OCI-LY7 (cell line): ENCODE measurements at regions of chr10 and their contacts with region 1.

Region 1: DNA sequence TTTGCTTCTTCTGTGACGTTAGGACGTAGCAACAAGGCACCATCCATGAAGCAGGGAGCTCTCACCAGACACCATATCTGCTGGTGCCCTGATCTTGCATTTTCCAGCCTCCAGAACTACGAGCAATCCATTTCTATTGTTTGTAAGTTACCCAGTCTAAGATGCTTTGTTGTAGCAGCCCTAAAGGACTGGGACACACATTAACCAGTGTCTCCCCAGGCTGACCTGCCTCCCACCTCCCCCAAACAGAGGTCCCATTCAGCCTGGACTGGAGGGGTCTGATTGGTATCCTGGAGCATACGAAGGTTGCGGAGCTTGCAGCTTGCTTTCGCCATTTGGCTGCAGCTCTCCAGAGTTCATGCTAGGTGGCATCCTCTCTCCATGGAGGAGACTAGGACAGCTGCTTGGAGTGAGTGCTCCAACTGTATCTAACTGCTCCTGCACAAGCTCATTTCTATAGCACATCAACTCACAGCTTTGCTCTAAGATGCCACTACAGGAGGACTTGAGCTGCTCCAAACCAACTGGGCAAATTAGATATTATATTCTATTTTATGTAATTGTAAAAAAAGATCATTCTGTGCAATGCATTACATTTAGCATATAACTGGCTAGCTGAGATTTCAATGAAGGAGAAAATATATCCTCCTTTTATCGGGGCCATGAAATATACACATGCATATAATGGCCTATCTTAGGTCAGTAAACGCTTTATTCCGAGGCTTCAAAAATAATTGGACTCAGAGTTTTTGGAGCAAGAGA is 8.0 kb upstream of the GRK5 start:
- DNase-seq: peak; percentile 85
- H3K4me3 ChIP-seq: no peak overlapping the region
- H3K27ac ChIP-seq: no peak overlapping the region
- H3K4me1 ChIP-seq: no peaks in the 10 kb centered on the region
- CTCF ChIP-seq: peak; percentile 91

Region 2: DNA sequence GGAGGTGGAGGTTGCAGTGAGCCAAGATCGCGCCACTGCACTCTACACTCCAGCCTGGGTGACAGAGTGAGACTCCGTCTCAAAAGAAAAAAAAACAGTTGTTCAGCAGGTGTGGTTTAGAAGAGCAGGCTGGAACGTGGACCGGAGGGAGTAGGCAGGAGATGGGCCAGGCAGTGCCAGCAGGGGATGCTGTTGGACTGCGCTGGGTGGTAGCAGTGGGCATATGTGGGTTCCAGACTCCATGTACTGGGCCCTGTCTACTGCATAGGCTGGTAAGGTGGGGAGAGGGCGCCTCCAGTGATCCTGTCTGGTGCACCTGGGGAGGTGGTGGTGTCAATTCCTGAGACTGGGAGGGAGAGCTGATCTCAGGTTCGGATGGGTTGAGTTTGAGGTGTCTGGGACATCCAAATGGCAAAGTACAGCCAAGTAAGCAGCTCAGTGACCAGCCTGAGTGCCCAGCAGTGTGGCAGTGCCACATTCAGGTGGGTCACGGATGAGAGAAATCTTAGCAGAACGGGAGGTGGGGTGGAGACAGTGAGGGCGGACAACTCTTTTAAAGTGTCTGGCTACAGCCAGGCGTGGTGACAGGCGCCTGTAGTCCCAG is 59.8 kb before region 1 on chr10:
- CTCF ChIA-PET with region 1: no interaction called
- POLR2A ChIA-PET with region 1: no interaction called
- intact Hi-C with region 1: loop called (anchors 1 kb)
- DNase-seq: peak; percentile 46
- H3K4me3 ChIP-seq: no peak overlapping the region
- H3K27ac ChIP-seq: no peak overlapping the region
- H3K4me1 ChIP-seq: peaks cover 3% of the 10 kb centered on the region
- CTCF ChIP-seq: peak; percentile 69

Region 3: DNA sequence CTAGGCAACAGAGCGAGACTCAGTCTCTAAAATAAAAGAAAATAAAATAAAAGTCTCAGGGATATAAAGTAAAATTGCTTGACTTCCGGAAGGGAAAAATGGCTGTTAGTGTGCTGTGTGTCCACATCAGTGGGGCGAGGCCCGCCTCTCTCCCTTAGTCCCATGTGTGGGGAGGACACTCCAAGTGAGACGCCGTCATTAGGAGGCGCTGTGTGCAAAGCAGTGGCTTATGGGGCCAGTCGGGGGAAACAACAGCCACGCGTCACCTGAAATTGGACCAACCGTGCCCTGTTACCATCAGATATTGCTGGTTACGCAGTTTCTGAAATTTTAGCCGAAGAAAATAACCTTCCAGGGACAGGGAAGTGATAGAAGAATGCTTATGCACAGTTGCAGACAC is 49.7 kb before region 1 on chr10:
- CTCF ChIA-PET with region 1: no interaction called
- POLR2A ChIA-PET with region 1: no interaction called
- intact Hi-C with region 1: no loop called
- DNase-seq: no peak
- H3K4me3 ChIP-seq: no peak overlapping the region
- H3K27ac ChIP-seq: no peak overlapping the region
- H3K4me1 ChIP-seq: peaks cover 4% of the 10 kb centered on the region
- CTCF ChIP-seq: peak; percentile 48

Region 4: DNA sequence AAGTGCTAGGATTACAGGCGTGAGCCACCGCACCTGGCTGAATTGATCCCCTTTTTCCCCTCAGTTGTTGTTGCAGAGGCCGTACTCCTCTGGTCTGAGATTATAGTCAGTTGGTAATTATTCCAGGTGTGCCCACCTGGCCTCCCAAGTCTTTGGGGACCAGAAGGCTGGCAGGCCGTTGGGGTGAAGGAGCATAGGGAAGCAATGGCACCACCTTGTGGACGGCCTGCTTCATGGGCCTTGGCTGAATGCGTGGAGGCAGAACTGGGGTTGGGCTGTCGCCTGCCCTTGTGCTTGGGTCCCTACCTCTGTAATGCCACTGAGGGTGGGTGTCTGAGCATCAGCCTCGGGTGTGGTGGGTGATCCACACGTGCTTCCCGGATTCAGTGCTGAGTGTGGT is 217.4 kb after region 1 on chr10:
- CTCF ChIA-PET with region 1: interaction called, 9 read pairs
- POLR2A ChIA-PET with region 1: no interaction called
- intact Hi-C with region 1: loop called (anchors 1 kb)
- DNase-seq: peak; percentile 82
- H3K4me3 ChIP-seq: no peak overlapping the region
- H3K27ac ChIP-seq: no peak overlapping the region
- H3K4me1 ChIP-seq: no peaks in the 10 kb centered on the region
- CTCF ChIP-seq: peak; percentile 89

Region 5: GRCh38 chr10:119445311-119445934 is 246.0 kb after region 1 on chr10:
- CTCF ChIA-PET with region 1: interaction called, 16 read pairs
- POLR2A ChIA-PET with region 1: no interaction called
- intact Hi-C with region 1: loop called (anchors 1 kb)
- DNase-seq: peak; percentile 82
- H3K4me3 ChIP-seq: no peak overlapping the region
- H3K27ac ChIP-seq: no peak overlapping the region
- H3K4me1 ChIP-seq: peaks cover 26% of the 10 kb centered on the region
- CTCF ChIP-seq: peak; percentile 92